ENCODE measurements at regions of chr7 and their contacts with region 1.

Region 1: DNA sequence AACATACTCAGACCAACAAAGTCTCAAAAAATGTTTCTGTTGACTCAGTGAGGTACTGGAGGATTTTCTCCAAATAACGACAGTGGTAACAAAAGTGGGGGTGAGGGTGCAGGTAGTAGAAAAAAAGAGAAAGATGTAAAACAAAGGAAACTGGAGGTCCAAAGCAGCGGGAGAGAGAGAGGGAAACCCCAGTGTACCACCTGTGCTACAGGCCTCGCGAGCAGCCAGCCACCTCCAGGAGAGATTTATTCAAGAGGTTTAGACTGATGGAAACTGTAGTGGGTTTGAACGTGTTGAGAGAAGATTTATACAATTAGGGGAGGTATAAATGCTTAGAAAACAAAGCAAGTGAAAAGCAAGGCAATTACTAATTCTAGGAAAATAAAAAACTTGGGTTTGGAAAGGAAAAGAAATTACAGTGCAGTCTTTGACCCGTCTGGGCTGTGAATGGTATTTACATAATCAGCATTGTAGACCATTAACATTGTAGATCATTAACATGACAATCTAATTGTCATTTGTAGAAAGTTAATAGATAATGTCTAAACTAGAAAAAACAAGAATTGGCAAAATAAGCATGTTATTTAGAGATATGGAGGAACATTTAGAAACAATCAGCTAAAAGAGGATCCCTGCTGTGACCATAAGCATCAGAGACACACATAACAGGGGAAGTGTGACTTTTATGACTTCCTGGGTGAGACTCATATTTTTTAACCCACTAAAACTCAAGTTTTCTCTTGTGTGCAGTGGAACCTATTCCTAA is 180.0 kb downstream of the RELN start:
- DNase-seq: no peak
- ATAC-seq: no peak
- H3K4me3 ChIP-seq: no peak overlapping the region
- H3K4me3 Mint-ChIP-seq: no peak overlapping the region
- H3K27ac ChIP-seq: no peak overlapping the region
- H3K27ac Mint-ChIP-seq: no peak overlapping the region
- H3K4me1 ChIP-seq: no peaks in the 10 kb centered on the region
- H3K4me1 Mint-ChIP-seq: peaks cover 28% of the 10 kb centered on the region
- H3K27me3 ChIP-seq: no peaks in the 10 kb centered on the region
- H3K27me3 Mint-ChIP-seq: no peaks in the 10 kb centered on the region
- CTCF ChIP-seq: no peak

Region 2: GRCh38 chr7:103843689-103844480 is 34.5 kb after region 1 on chr7:
- CTCF ChIA-PET with region 1: no interaction called
- POLR2A ChIA-PET with region 1: no interaction called
- intact Hi-C with region 1: loop called in 1 of 2 experiments (anchors 5 kb)
- DNase-seq: no peak
- ATAC-seq: no peak
- H3K4me3 ChIP-seq: no peak overlapping the region
- H3K4me3 Mint-ChIP-seq: no peak overlapping the region
- H3K27ac ChIP-seq: no peak overlapping the region
- H3K27ac Mint-ChIP-seq: no peak overlapping the region
- H3K4me1 ChIP-seq: no peaks in the 10 kb centered on the region
- H3K4me1 Mint-ChIP-seq: no peaks in the 10 kb centered on the region
- H3K27me3 ChIP-seq: no peaks in the 10 kb centered on the region
- H3K27me3 Mint-ChIP-seq: peaks cover 5% of the 10 kb centered on the region
- CTCF ChIP-seq: no peak

Region 3: DNA sequence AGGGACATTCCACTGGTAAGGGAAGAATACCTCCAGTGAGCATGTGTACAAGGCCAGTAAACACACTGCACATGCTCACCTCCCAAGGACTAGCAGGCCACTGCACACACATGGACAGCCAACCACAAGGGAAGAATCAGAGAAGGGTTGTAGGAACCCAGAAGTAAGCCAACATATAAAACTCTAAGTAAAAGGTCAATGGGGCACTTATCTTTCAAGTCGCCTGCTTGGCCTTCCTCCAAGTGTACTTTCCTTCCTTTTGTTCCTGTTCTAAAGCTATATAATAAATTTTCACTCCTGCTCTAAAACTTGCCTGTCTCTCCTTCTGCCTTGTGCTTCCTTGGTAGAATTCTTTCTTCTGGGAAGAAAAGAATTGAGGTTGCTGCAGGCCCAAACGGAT is 365.4 kb after region 1 on chr7:
- CTCF ChIA-PET with region 1: no interaction called
- POLR2A ChIA-PET with region 1: no interaction called
- intact Hi-C with region 1: no loop called
- DNase-seq: no peak
- ATAC-seq: no peak
- H3K4me3 ChIP-seq: no peak overlapping the region
- H3K4me3 Mint-ChIP-seq: no peak overlapping the region
- H3K27ac ChIP-seq: no peak overlapping the region
- H3K27ac Mint-ChIP-seq: no peak overlapping the region
- H3K4me1 ChIP-seq: no peaks in the 10 kb centered on the region
- H3K4me1 Mint-ChIP-seq: no peaks in the 10 kb centered on the region
- H3K27me3 ChIP-seq: no peaks in the 10 kb centered on the region
- H3K27me3 Mint-ChIP-seq: no peaks in the 10 kb centered on the region
- CTCF ChIP-seq: no peak

Measured in CD8-positive, alpha-beta T cell (primary cell).